Endothelial cell of umbilical vein (primary cell): ENCODE measurements at regions of chr20 and their contacts with region 1.

Region 1: GRCh38 chr20:44018259-44018941 is 103.7 kb downstream of the TOX2 start:
- DNase-seq: peak; percentile 84
- H3K4me3 ChIP-seq: no peak overlapping the region
- H3K27ac ChIP-seq: no peak overlapping the region
- H3K4me1 ChIP-seq: peaks cover 39% of the 10 kb centered on the region
- H3K27me3 ChIP-seq: no peaks in the 10 kb centered on the region
- CTCF ChIP-seq: no peak
- POLR2A ChIP-seq: no peak

Region 2: DNA sequence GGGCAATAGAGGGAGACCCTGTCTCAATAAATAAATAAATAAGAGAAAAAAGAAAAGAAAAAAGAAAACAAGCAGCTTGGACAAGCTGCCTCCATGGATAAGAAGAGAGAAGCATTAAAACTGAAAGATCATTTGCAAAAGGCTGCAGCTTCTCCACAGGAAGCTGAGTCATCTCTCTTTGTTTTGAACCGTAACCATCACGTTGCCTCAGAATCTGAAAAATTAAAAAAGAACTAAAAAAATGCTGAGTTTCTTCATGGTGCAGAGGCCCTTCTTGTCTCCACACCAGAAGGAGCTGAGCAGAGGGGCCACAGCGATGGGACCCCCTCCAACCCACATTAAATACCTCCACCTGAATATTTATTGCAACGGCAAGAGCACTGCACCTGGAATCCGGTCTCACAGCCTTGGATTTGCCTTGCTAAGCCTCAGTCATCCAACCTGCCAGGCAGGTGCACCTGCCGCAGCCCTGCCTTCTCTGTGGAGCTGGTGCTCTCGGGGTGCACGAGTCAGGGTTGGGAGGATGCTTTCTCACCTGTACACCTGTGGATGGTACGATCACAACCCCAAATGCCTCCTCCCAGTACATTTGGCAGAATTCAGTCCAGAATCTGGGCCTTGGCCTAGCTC is 75.6 kb before region 1 on chr20:
- CTCF ChIA-PET with region 1: interaction called, 5 read pairs
- POLR2A ChIA-PET with region 1: no interaction called
- dilution Hi-C with region 1: no loop called
- intact Hi-C with region 1: loop called (anchors 1 kb)
- DNase-seq: peak; percentile 78
- H3K4me3 ChIP-seq: no peak overlapping the region
- H3K27ac ChIP-seq: peak overlapping the region; percentile 75
- H3K4me1 ChIP-seq: peaks cover 46% of the 10 kb centered on the region
- H3K27me3 ChIP-seq: no peaks in the 10 kb centered on the region
- CTCF ChIP-seq: no peak
- POLR2A ChIP-seq: no peak

Region 3: DNA sequence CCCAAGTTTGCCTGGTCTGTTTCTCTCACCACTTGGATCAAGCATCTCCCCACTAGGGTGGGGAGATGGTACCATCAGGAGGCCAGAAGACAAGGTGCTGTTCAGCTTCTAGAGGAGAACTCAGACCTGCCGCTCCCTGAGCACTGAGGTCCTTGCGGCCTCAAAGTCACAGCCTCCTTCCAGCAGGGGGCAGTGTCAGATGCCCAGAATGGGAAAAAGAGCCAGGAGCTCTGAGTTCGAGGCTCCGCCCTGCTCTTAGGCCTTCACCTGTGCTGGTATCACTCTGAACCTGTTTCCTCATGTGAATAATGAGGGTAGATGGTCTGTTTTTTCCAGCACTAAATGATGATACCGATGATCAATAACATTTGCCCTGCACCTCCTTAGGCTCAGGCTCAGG is 35.0 kb before region 1 on chr20:
- CTCF ChIA-PET with region 1: interaction called, 3 read pairs
- POLR2A ChIA-PET with region 1: no interaction called
- dilution Hi-C with region 1: no loop called
- intact Hi-C with region 1: loop called (anchors 2 kb)
- DNase-seq: no peak
- H3K4me3 ChIP-seq: no peak overlapping the region
- H3K27ac ChIP-seq: peak overlapping the region; percentile 71
- H3K4me1 ChIP-seq: peaks cover 23% of the 10 kb centered on the region
- H3K27me3 ChIP-seq: no peaks in the 10 kb centered on the region
- CTCF ChIP-seq: peak; percentile 22 to 33
- POLR2A ChIP-seq: no peak

Region 4: DNA sequence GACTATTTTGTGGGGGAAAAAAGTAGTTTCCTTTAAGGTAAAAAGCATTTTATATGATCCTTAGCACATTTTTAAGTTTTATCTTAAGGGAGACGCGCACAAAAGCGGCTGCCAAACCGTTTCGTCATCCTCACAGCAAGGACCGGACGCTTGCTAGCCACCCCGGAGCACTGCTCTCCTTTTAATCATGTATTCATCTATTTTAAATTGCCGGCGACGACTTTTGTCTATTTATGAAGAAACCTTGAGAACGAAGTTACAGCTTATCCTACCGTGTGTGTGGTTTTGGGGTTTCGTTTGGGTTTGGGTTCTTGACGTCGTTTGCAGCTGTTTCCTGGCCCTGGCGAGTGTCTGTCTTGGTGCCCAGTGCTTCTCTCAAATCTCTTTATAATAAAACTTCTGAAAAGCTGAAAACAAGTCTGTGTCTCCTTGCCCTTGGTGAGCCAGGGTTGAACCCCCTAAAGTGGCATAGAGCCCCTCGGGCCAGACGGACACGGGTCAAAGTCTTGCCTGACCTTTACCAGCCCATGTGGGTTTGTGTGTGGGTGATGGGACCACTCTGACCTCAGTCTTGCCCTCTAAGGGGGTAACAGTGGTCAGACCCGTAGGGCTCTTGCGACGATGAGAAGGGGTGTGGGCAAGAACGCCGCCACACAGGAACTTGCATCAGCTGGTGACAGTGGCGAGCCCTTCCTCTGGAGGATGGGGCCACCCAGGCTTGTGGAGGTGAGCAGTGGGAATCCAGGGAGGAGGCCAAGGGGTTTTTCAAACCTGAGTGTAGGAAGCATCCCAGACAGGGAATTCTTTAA is 51.0 kb after region 1 on chr20:
- CTCF ChIA-PET with region 1: no interaction called
- POLR2A ChIA-PET with region 1: no interaction called
- dilution Hi-C with region 1: no loop called
- intact Hi-C with region 1: loop called (anchors 5 kb)
- DNase-seq: no peak
- H3K4me3 ChIP-seq: no peak overlapping the region
- H3K27ac ChIP-seq: no peak overlapping the region
- H3K4me1 ChIP-seq: peaks cover 2% of the 10 kb centered on the region
- H3K27me3 ChIP-seq: no peaks in the 10 kb centered on the region
- CTCF ChIP-seq: no peak
- POLR2A ChIP-seq: no peak